ENCODE measurements at regions of chr2 and their contacts with region 1.

Region 1: DNA sequence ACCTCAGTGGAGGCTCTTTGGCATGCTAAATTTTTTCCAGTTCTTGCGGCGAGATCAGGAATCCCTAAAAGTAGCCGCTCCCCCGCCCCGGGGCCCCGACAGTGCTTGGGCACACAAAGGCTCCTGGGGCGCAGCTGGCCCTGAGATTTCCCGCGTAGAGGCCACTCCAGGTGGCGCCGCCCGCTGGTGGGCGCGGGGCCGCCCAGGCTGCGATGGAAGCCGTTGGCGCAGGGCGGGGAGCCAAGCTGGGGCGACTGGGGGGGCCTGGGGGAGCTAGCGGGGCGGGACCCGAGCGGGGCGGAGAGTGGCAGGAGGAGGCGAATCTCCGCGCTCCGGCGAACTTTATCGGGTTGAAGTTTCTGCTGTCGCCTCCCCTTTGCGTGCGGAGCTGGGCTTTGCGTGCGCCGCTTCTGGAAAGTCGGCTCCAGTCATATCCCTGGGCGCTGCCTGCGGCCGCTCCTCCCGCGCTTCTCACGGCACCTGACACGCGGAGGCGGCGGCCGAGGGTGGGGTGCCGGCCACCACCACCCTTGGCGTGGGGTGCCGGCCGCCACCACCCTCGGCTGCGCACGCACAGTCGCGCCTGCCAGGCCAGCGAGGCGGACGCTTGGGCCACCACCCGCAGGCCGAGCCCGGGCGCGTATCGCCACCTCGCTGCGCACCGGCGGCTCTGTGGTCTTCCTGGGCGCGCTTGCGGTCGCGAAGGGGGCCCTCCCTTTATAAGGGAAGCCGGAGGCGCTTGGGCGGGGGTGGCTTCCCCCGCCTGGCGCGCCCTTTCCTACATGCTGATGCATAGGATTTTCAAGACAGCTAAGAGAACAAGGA is 867 bp upstream of the CYP1B1 start:
- DNase-seq: peak; percentile 78 to 93
- ATAC-seq: peak; percentile 76 to 78
- H3K4me3 ChIP-seq: peak overlapping the region; percentile 62
- H3K27ac ChIP-seq: peak overlapping the region; percentile 84 to 93
- H3K4me1 ChIP-seq: peaks cover 22% of the 10 kb centered on the region
- CTCF ChIP-seq: peak; percentile 70
- EP300 ChIP-seq: peak in 1 of 2 experiments; percentile 71; a peak in 1 of 5 replicates
- POLR2A ChIP-seq: peak; percentile 57
- RAD21 ChIP-seq: no peak; a peak in 3 of 5 replicates

Region 2: DNA sequence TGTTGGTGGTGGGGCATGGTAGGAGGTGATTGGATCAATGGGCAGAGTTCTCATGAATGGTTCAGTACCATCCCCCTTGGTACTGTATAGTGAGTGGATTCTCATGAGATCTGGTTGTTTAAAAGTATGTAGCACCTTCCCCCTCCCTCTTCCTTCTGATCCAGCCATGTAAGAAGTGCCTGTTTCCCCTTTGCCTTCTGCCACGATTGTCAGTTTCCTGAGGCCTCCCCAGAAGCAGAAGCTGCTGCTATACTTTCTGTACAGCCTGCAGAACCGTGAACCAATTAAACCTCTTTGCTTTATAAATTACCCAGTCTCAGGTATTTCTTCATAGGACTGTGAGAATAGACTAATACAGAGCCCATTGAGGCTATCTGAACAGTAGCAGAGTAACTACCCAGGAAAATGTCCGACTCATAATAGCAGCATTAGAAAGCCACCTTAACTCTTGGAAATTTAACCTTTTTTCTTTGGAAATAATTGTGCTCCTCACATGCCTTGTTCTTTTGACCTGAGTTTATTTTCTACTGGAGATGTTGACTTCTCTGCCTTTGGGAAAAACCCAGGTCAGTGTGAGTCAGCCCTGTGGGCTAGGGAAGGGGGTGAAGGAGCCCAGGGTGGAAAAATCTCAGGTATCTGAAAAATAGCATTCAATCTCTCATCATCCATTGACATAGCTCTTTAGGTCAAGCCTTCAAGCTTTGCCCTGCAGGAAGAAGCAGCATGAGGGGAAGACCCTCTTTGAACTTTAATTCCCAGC is 19.0 kb before region 1 on chr2:
- CTCF ChIA-PET with region 1: interaction called, 30 read pairs
- POLR2A ChIA-PET with region 1: no interaction called
- DNase-seq: no peak
- ATAC-seq: peak in 1 of 2 experiments; percentile 51; a peak in 3 of 6 replicates
- H3K4me3 ChIP-seq: no peak overlapping the region
- H3K27ac ChIP-seq: no peak overlapping the region
- H3K4me1 ChIP-seq: peaks cover 12% of the 10 kb centered on the region; the same call in 2 of the 3 replicates
- CTCF ChIP-seq: no peak
- EP300 ChIP-seq: no peak
- POLR2A ChIP-seq: no peak
- RAD21 ChIP-seq: no peak

Region 3: GRCh38 chr2:38095996-38096861 is 19.4 kb after region 1 on chr2:
- CTCF ChIA-PET with region 1: interaction called, 40 read pairs
- POLR2A ChIA-PET with region 1: interaction called, 11 read pairs
- DNase-seq: peak in 1 of 2 experiments; percentile 66
- ATAC-seq: peak; percentile 40 to 67; a peak in 5 of 6 replicates
- H3K4me3 ChIP-seq: no peak overlapping the region
- H3K27ac ChIP-seq: peak overlapping the region; percentile 34; a peak in 5 of 6 replicates
- H3K4me1 ChIP-seq: peaks cover 52% of the 10 kb centered on the region
- CTCF ChIP-seq: no peak
- EP300 ChIP-seq: no peak; a peak in 1 of 5 replicates
- POLR2A ChIP-seq: no peak
- RAD21 ChIP-seq: no peak

Region 4: GRCh38 chr2:38106405-38107094 is 29.7 kb after region 1 on chr2:
- CTCF ChIA-PET with region 1: interaction called, 15 read pairs
- POLR2A ChIA-PET with region 1: interaction called, 28 read pairs
- DNase-seq: peak in 1 of 2 experiments; percentile 36
- ATAC-seq: peak in 1 of 2 experiments; percentile 56; a peak in 3 of 6 replicates
- H3K4me3 ChIP-seq: no peak overlapping the region
- H3K27ac ChIP-seq: peak overlapping the region; percentile 62 to 73
- H3K4me1 ChIP-seq: peaks cover 28% of the 10 kb centered on the region
- CTCF ChIP-seq: no peak
- EP300 ChIP-seq: no peak
- POLR2A ChIP-seq: no peak
- RAD21 ChIP-seq: no peak

Region 5: GRCh38 chr2:38115216-38116032 is 38.6 kb after region 1 on chr2:
- CTCF ChIA-PET with region 1: interaction called, 25 read pairs
- POLR2A ChIA-PET with region 1: interaction called, 28 read pairs
- DNase-seq: peak; percentile 82 to 88
- ATAC-seq: peak; percentile 92 to 98
- H3K4me3 ChIP-seq: no peak overlapping the region
- H3K27ac ChIP-seq: no peak overlapping the region
- H3K4me1 ChIP-seq: peaks cover 10% of the 10 kb centered on the region
- CTCF ChIP-seq: peak; percentile 98
- EP300 ChIP-seq: no peak
- POLR2A ChIP-seq: no peak
- RAD21 ChIP-seq: peak; percentile 89 to 97

Region 6: GRCh38 chr2:38274286-38275276 is 197.8 kb after region 1 on chr2:
- CTCF ChIA-PET with region 1: interaction called, 45 read pairs
- POLR2A ChIA-PET with region 1: interaction called, 22 read pairs
- DNase-seq: peak; percentile 76 to 87
- ATAC-seq: peak; percentile 86 to 90
- H3K4me3 ChIP-seq: no peak overlapping the region
- H3K27ac ChIP-seq: peak overlapping the region; percentile 29 to 42; a peak in 4 of 6 replicates
- H3K4me1 ChIP-seq: peaks cover 26% of the 10 kb centered on the region
- CTCF ChIP-seq: peak; percentile 95
- EP300 ChIP-seq: no peak
- POLR2A ChIP-seq: no peak
- RAD21 ChIP-seq: peak; percentile 96 to 98